ENCODE measurements at regions of chr9 and their contacts with region 1.

Region 1: DNA sequence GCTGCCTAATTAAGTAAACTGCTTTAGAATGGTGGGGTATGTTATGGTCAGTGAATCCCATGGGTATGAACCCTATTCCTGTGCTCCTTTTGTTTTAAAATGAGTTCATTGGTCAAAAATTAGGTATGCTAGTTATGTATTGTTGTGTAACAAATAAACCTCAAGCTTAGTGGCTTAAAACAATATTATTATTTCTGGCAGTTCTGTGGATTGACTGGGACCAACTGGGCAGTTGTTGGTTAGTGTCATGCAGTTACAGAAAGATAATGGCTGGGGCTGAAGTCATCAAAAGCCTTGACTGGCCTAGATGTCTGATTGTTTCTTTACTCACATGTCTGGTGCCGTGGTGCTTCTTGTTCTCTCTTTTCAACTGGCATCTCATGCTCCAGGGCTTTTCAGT is 8.9 kb upstream of the PTAR1 start:
- DNase-seq: no peak
- ATAC-seq: no peak
- H3K4me3 ChIP-seq: no peak overlapping the region
- H3K4me3 Mint-ChIP-seq: no peak overlapping the region
- H3K27ac ChIP-seq: no peak overlapping the region
- H3K27ac Mint-ChIP-seq: no peak overlapping the region
- H3K4me1 ChIP-seq: no peaks in the 10 kb centered on the region
- H3K4me1 Mint-ChIP-seq: no peaks in the 10 kb centered on the region
- H3K27me3 ChIP-seq: no peaks in the 10 kb centered on the region
- H3K27me3 Mint-ChIP-seq: no peaks in the 10 kb centered on the region
- CTCF ChIP-seq: no peak

Region 2: GRCh38 chr9:69044240-69045219 is 724.2 kb before region 1 on chr9:
- CTCF ChIA-PET with region 1: no interaction called
- POLR2A ChIA-PET with region 1: no interaction called
- intact Hi-C with region 1: loop called in 1 of 2 experiments (anchors 5 kb)
- DNase-seq: no peak
- ATAC-seq: no peak
- H3K4me3 ChIP-seq: no peak overlapping the region
- H3K4me3 Mint-ChIP-seq: no peak overlapping the region
- H3K27ac ChIP-seq: no peak overlapping the region
- H3K27ac Mint-ChIP-seq: peak overlapping the region; percentile 36
- H3K4me1 ChIP-seq: peaks cover 4% of the 10 kb centered on the region
- H3K4me1 Mint-ChIP-seq: peaks cover 45% of the 10 kb centered on the region
- H3K27me3 ChIP-seq: no peaks in the 10 kb centered on the region
- H3K27me3 Mint-ChIP-seq: no peaks in the 10 kb centered on the region
- CTCF ChIP-seq: no peak

Measured in CD4-positive, alpha-beta T cell (primary cell).